H1 (cell line): ENCODE measurements at regions of chr16 and their contacts with region 1.

Region 1: GRCh38 chr16:68382296-68382718 is 66.0 kb downstream of the SMPD3 start:
- DNase-seq: peak in 1 of 2 experiments; percentile 78
- H3K4me3 ChIP-seq: no peak overlapping the region
- H3K27ac ChIP-seq: no peak overlapping the region
- H3K4me1 ChIP-seq: peaks cover 3 to 23% (median 15%) of the 10 kb centered on the region in 4 experiments
- H3K27me3 ChIP-seq: no peaks in the 10 kb centered on the region; a peak in 1 of 7 replicates
- CTCF ChIP-seq: peak; percentile 57 to 88 (median 71)
- EP300 ChIP-seq: no peak
- POLR2A ChIP-seq: no peak
- RAD21 ChIP-seq: peak in 1 of 2 experiments; percentile 49; a peak in 2 of 4 replicates

Region 2: GRCh38 chr16:68197250-68197649 is 185.1 kb before region 1 on chr16:
- CTCF ChIA-PET with region 1: no interaction called
- POLR2A ChIA-PET with region 1: no interaction called
- DNase-seq: no peak
- H3K4me3 ChIP-seq: no peak overlapping the region
- H3K27ac ChIP-seq: no peak overlapping the region
- H3K4me1 ChIP-seq: no peaks in the 10 kb centered on the region
- H3K27me3 ChIP-seq: no peaks in the 10 kb centered on the region
- CTCF ChIP-seq: no peak
- EP300 ChIP-seq: no peak
- POLR2A ChIP-seq: no peak
- RAD21 ChIP-seq: no peak

Region 3: GRCh38 chr16:68361485-68361884 is 20.8 kb before region 1 on chr16:
- CTCF ChIA-PET with region 1: interaction called, 221 read pairs
- POLR2A ChIA-PET with region 1: interaction called, 6 read pairs
- DNase-seq: no peak
- H3K4me3 ChIP-seq: no peak overlapping the region
- H3K27ac ChIP-seq: no peak overlapping the region
- H3K4me1 ChIP-seq: peaks cover 0 to 3% (median 3%) of the 10 kb centered on the region in 4 experiments; a peak in 2 of 7 replicates
- H3K27me3 ChIP-seq: no peaks in the 10 kb centered on the region
- CTCF ChIP-seq: no peak
- EP300 ChIP-seq: no peak
- POLR2A ChIP-seq: no peak
- RAD21 ChIP-seq: no peak

Region 4: DNA sequence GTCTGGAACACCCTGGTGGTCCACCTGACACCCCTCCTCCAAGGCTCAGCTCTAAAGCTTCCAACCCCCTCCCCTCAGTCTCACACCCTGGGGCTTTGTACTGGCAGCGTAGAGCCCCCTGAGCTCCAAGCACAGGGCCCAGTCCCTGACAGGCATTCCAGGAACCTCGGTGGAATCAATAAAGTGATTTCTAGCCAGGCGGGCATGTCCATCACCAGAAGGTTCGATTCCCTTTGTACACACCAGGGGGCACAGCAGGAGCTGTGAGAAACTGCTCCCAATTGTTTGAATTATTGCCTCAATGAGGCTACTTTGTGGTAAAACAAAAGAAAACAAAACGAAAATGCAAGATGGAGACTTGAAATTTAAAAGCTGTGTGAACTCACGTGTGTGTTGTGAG is 14.2 kb after region 1 on chr16:
- CTCF ChIA-PET with region 1: interaction called, 25 read pairs
- POLR2A ChIA-PET with region 1: no interaction called
- DNase-seq: no peak
- H3K4me3 ChIP-seq: no peak overlapping the region
- H3K27ac ChIP-seq: no peak overlapping the region
- H3K4me1 ChIP-seq: peaks cover 0 to 11% (median 2%) of the 10 kb centered on the region in 4 experiments; a peak in 5 of 7 replicates
- H3K27me3 ChIP-seq: no peaks in the 10 kb centered on the region
- CTCF ChIP-seq: peak in 2 of 3 experiments; percentile 2 to 13; a peak in 1 of 4 replicates
- EP300 ChIP-seq: no peak
- POLR2A ChIP-seq: no peak
- RAD21 ChIP-seq: no peak; a peak in 1 of 4 replicates

Region 5: DNA sequence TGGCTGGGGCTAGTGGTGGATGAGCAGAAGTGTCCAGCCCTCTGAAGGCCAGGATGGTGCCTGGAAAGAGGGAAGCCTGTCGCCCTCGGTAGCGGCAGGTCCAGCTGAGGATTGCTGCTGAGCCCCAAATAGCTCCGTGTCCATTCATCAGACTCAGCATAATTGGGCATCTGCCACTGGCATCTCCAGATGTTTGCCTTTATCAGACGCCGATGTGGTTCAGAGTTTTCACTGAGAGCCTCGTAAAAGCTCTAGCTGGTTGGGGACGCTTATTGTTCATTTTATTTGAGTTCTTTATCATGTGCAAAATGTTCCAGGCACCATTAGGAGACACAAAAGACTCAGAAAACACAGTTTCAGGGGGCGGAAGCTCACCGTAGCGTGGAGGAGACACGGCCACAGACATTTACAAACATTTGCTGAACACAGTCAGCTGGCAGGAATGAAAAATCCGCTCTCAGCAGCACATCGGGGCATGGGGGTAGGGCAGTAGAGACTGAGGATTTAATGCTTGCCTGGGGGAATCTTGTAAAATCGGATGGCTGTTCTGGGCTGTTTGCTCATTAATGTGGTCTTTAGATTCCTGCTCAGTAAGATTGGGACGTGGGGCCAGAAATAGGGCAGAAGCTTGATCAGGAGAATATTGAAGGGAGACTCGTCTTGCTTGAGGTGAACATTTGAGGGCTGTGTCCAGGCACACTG is 24.3 kb after region 1 on chr16:
- CTCF ChIA-PET with region 1: interaction called, 20 read pairs
- POLR2A ChIA-PET with region 1: interaction called, 4 read pairs
- DNase-seq: no peak
- H3K4me3 ChIP-seq: no peak overlapping the region
- H3K27ac ChIP-seq: no peak overlapping the region
- H3K4me1 ChIP-seq: peaks cover 0 to 15% (median 6%) of the 10 kb centered on the region in 4 experiments; a peak in 6 of 7 replicates
- H3K27me3 ChIP-seq: no peaks in the 10 kb centered on the region; a peak in 1 of 7 replicates
- CTCF ChIP-seq: no peak
- EP300 ChIP-seq: no peak
- POLR2A ChIP-seq: no peak
- RAD21 ChIP-seq: no peak

Region 6: GRCh38 chr16:68417711-68418301 is 35.5 kb after region 1 on chr16:
- CTCF ChIA-PET with region 1: interaction called, 18 read pairs
- POLR2A ChIA-PET with region 1: no interaction called
- DNase-seq: no peak
- H3K4me3 ChIP-seq: no peak overlapping the region
- H3K27ac ChIP-seq: no peak overlapping the region
- H3K4me1 ChIP-seq: peaks cover 0 to 5% (median 1%) of the 10 kb centered on the region in 4 experiments; a peak in 2 of 7 replicates
- H3K27me3 ChIP-seq: no peaks in the 10 kb centered on the region; a peak in 1 of 7 replicates
- CTCF ChIP-seq: no peak
- EP300 ChIP-seq: no peak
- POLR2A ChIP-seq: no peak
- RAD21 ChIP-seq: no peak

Region 7: GRCh38 chr16:68486502-68487202 is 104.3 kb after region 1 on chr16:
- CTCF ChIA-PET with region 1: interaction called, 13 read pairs
- POLR2A ChIA-PET with region 1: no interaction called
- DNase-seq: no peak
- H3K4me3 ChIP-seq: no peak overlapping the region
- H3K27ac ChIP-seq: no peak overlapping the region
- H3K4me1 ChIP-seq: peaks cover 6 to 14% (median 10%) of the 10 kb centered on the region in 4 experiments
- H3K27me3 ChIP-seq: no peaks in the 10 kb centered on the region
- CTCF ChIP-seq: no peak
- EP300 ChIP-seq: no peak
- POLR2A ChIP-seq: no peak
- RAD21 ChIP-seq: no peak